MCF 10A (cell line): ENCODE measurements at regions of chr20 and their contacts with region 1.

Region 1: DNA sequence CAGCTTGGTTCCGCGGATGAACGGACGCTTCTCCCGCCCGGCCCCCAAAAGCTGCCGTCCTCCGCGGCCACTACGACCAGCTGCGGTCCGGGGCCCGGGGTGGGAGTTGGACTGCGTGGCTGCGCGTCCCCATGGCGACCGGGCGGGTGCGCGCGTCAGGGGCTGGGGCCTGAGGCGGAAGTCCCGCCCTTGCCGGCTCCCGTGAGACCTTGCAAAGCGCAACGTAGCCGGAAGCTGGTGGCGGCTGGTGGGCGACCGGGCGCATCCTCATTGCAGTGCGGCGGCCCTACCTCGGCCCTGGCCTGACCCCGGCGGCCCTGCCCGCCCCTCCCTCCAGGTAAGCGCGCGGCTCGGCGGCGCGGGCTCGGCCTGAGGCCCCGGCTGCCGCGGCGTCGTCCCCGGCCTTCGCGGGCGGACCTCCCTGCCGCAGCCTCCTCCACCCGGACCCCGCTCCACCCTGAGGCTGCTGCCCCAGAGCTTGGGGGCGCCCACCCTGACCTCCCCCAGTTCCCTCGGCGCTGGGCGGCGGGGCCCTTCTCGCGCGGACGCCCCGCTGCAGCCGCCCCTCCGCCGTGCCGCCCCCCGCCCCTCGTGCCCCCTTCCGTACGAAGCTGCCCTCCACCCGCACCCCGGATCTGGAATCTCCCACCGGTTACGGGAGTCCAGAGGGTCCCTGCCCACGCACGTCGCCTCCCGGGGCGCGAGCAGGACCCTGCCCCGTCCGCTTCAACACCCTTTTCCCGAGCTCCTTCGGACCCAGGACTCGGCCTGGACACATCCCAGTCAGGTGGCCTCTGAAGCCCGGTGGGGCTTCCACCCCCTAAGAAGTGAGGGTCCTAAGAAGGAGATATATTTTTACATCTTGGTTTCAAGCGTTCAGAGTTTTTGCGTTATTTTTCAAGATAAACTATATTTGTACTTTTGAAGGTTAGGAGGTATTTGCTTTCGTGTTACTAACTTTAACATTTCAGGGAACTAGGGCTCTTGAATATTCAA is at the start of gene ARFGAP1:
- DNase-seq: peak; percentile 81
- H3K4me3 Mint-ChIP-seq: peak within 1 kb of the TSS; percentile 76
- H3K27ac Mint-ChIP-seq: peak within 1 kb of the TSS; percentile 90
- H3K4me1 Mint-ChIP-seq: peaks cover 13% of the 10 kb centered on the region
- H3K27me3 Mint-ChIP-seq: no peaks in the 10 kb centered on the region
- CTCF ChIP-seq: no peak
- total RNA-seq, gene ARFGAP1: 93.6 and 97.2 TPM in 2 replicates

Region 2: GRCh38 chr20:63216041-63216848 is 56.6 kb before region 1 on chr20 and contains the start of gene YTHDF1:
- CTCF ChIA-PET with region 1: interaction called, 3 read pairs
- POLR2A ChIA-PET with region 1: interaction called, 10 read pairs
- intact Hi-C with region 1: no loop called
- DNase-seq: peak; percentile 95
- H3K4me3 Mint-ChIP-seq: peak within 1 kb of the TSS; percentile 91
- H3K27ac Mint-ChIP-seq: peak within 1 kb of the TSS; percentile 92
- H3K4me1 Mint-ChIP-seq: peaks cover 35% of the 10 kb centered on the region
- H3K27me3 Mint-ChIP-seq: peaks cover 17% of the 10 kb centered on the region
- CTCF ChIP-seq: no peak
- total RNA-seq, gene YTHDF1: 47.1 and 49.5 TPM in 2 replicates

Region 3: DNA sequence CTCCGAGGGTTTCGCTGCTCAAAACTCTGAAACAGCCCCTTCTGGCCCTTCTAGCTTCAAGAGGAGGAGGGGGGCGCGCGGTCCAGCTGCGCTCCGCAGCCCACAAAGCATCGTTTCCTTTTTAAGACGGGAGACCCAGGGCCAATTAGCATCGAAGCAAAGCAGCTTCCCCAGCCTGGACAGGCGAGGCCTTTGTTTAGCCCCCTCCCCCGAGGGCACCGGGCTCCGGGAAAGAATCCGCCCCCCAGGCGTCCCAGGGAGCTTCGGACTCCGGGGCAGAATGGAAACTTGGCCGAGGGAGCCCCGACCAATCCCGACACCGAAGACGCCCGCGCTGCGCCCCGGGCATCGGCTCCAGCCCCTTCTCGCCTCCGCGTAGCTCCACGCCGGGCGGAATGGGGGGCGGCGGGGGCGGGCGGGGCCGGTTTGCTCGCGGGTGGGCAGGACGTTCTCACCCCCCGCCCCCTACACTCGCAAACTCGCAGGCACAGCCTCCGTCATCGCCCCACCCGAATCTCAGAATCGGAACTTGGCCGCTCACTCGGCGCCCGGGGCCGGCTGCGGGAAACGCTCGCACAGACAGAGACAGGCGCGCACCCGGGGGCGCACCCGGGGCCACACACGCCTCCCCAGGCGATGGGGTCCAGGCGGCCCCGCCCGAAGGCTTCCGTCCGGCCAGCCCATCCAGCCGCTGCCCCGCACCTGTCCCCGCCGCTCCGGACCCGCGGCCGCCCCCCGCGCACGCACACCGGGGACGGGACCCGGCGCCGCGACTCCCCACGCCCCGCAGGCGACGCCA is 19.2 kb before region 1 on chr20:
- CTCF ChIA-PET with region 1: interaction called, 5 read pairs
- POLR2A ChIA-PET with region 1: interaction called, 20 read pairs
- intact Hi-C with region 1: no loop called
- DNase-seq: no peak
- H3K4me3 Mint-ChIP-seq: no peak overlapping the region
- H3K27ac Mint-ChIP-seq: no peak overlapping the region
- H3K4me1 Mint-ChIP-seq: peaks cover 27% of the 10 kb centered on the region
- H3K27me3 Mint-ChIP-seq: peaks cover 39% of the 10 kb centered on the region
- CTCF ChIP-seq: no peak